ENCODE measurements at regions of chr7 and their contacts with region 1.

Region 1: GRCh38 chr7:99325545-99326407 is at the start of gene ARPC1A:
- DNase-seq: peak; percentile 86 to 93 (median 92)
- H3K4me3 ChIP-seq: peak within 1 kb of the TSS; percentile 36 to 99
- H3K4me3 Mint-ChIP-seq: peak within 1 kb of the TSS; percentile 86 to 95 (median 90)
- H3K27ac ChIP-seq: peak within 1 kb of the TSS; percentile 96
- H3K27ac Mint-ChIP-seq: peak within 1 kb of the TSS; percentile 89 to 97 (median 94)
- H3K4me1 ChIP-seq: peaks cover 49% of the 10 kb centered on the region
- H3K4me1 Mint-ChIP-seq: peaks cover 28 to 45% (median 35%) of the 10 kb centered on the region in 4 donors
- H3K27me3 ChIP-seq: no peaks in the 10 kb centered on the region
- H3K27me3 Mint-ChIP-seq: no peaks in the 10 kb centered on the region
- total RNA-seq, gene ARPC1A: 46.2 to 51.5 TPM

Region 2: GRCh38 chr7:99143853-99144672 is 181.7 kb before region 1 on chr7 and contains the start of gene SMURF1:
- CTCF ChIA-PET with region 1: no interaction called
- POLR2A ChIA-PET with region 1: interaction called, 3 read pairs
- intact Hi-C with region 1: loop called (anchors 5 kb)
- DNase-seq: peak; percentile 64 to 87 (median 77)
- H3K4me3 ChIP-seq: peak within 1 kb of the TSS; percentile 55 to 94
- H3K4me3 Mint-ChIP-seq: peak within 1 kb of the TSS; percentile 93 to 99 (median 96)
- H3K27ac ChIP-seq: peak within 1 kb of the TSS; percentile 80
- H3K27ac Mint-ChIP-seq: peak within 1 kb of the TSS; percentile 94 to 99 (median 97)
- H3K4me1 ChIP-seq: peaks cover 25% of the 10 kb centered on the region
- H3K4me1 Mint-ChIP-seq: peaks cover 20 to 52% (median 36%) of the 10 kb centered on the region in 4 donors
- H3K27me3 ChIP-seq: no peaks in the 10 kb centered on the region
- H3K27me3 Mint-ChIP-seq: no peaks in the 10 kb centered on the region
- total RNA-seq, gene SMURF1: 21.4 to 23.2 TPM

Region 3: DNA sequence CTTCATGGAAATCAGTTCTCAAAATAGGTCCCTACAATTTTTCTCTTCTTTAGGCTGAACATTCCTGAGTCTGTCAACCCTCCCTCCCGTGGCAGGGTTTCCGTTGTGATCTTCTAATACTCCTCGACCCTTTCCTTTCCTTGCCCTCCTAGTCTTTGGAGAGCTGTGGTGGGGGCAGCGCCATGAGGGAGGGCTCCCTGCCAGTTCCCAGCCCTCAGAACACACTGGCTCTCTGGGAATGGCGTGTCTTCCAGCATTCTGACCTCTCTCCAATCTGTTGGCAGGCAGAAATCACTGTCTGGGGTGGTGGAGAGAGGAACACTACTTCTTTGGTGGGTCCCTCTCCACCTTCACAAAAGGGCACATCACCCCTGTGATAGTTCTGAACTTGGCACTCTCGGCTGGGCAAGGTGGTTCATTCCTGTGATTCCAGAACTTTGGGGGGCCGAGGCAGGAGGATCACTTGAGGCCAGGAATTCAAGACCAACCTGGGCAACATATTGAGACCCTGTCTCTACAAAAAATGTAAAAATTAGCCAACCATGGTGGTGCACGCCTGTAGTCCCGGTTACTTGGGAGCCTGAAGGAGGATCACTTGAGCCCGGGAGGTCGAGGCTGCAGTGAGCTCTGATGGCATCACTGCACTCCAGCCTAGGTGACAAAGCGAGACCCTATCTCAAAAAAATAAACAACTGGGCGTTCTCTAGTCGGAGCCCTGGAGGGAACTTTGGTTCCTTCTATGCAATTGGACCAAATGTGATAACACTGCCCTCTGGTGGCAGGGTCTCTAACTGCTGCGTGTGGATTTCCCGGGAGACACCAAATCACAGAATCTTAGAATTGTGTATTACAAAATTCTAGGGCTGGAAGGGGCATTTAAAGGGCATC is 13.2 kb before region 1 on chr7:
- CTCF ChIA-PET with region 1: interaction called, 40 read pairs
- POLR2A ChIA-PET with region 1: interaction called, 4 read pairs
- intact Hi-C with region 1: no loop called
- DNase-seq: peak; percentile 59 to 68 (median 63)
- H3K4me3 ChIP-seq: no peak overlapping the region
- H3K4me3 Mint-ChIP-seq: peak overlapping the region in 5 of 8 donors; percentile 7 to 65 (median 36)
- H3K27ac ChIP-seq: no peak overlapping the region
- H3K27ac Mint-ChIP-seq: peak overlapping the region in 3 of 7 donors; percentile 18 to 81 (median 70)
- H3K4me1 ChIP-seq: peaks cover 6% of the 10 kb centered on the region
- H3K4me1 Mint-ChIP-seq: peaks cover 0 to 5% (median under 1%) of the 10 kb centered on the region in 4 donors
- H3K27me3 ChIP-seq: no peaks in the 10 kb centered on the region
- H3K27me3 Mint-ChIP-seq: peaks cover 5 to 10% of the 10 kb centered on the region in 2 donors

Region 4: GRCh38 chr7:99380032-99380822 is 54.5 kb after region 1 on chr7:
- CTCF ChIA-PET with region 1: no interaction called
- POLR2A ChIA-PET with region 1: interaction called, 4 read pairs
- intact Hi-C with region 1: loop called (anchors 2 kb)
- DNase-seq: peak; percentile 23 to 62 (median 33)
- H3K4me3 ChIP-seq: peak overlapping the region; percentile 64 to 75
- H3K4me3 Mint-ChIP-seq: peak overlapping the region; percentile 69 to 93 (median 87)
- H3K27ac ChIP-seq: peak overlapping the region; percentile 93
- H3K27ac Mint-ChIP-seq: peak overlapping the region; percentile 93 to 99 (median 98)
- H3K4me1 ChIP-seq: peaks cover 90% of the 10 kb centered on the region
- H3K4me1 Mint-ChIP-seq: peaks cover 32 to 77% (median 55%) of the 10 kb centered on the region in 4 donors
- H3K27me3 ChIP-seq: no peaks in the 10 kb centered on the region
- H3K27me3 Mint-ChIP-seq: no peaks in the 10 kb centered on the region

Region 5: DNA sequence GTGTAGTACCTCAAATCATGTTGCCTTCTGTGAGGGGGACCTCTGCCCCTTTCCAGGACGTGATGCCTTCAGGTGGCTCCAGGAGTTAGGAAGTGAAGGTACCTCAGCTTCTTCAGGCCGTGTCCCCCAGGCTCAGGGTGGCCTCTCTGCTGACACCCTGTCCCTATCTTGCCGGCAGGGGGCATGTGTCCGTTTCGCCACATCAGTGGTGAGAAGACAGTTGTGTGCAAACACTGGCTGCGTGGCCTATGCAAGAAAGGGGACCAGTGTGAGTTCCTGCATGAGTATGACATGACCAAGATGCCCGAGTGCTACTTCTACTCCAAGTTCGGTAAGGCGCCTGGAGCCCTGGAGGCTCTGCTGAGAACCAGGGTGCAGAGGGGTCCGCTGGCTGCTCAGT is 122.2 kb after region 1 on chr7:
- CTCF ChIA-PET with region 1: no interaction called
- POLR2A ChIA-PET with region 1: no interaction called
- intact Hi-C with region 1: no loop called
- DNase-seq: no peak
- H3K4me3 ChIP-seq: no peak overlapping the region
- H3K4me3 Mint-ChIP-seq: no peak overlapping the region
- H3K27ac ChIP-seq: no peak overlapping the region
- H3K27ac Mint-ChIP-seq: peak overlapping the region in 1 of 7 donors; percentile 80
- H3K4me1 ChIP-seq: no peaks in the 10 kb centered on the region
- H3K4me1 Mint-ChIP-seq: peaks cover 0 to 11% (median 5%) of the 10 kb centered on the region in 4 donors
- H3K27me3 ChIP-seq: no peaks in the 10 kb centered on the region
- H3K27me3 Mint-ChIP-seq: no peaks in the 10 kb centered on the region